Activated CD4-positive, alpha-beta T cell treated with anti-CD3 and anti-CD28 coated beads, Interleukin-2, amount 10 ng/mL, durations not matched to agents 24 days and 14 days (primary cell): ENCODE measurements at regions of chr5 and their contacts with region 1.

Region 1: DNA sequence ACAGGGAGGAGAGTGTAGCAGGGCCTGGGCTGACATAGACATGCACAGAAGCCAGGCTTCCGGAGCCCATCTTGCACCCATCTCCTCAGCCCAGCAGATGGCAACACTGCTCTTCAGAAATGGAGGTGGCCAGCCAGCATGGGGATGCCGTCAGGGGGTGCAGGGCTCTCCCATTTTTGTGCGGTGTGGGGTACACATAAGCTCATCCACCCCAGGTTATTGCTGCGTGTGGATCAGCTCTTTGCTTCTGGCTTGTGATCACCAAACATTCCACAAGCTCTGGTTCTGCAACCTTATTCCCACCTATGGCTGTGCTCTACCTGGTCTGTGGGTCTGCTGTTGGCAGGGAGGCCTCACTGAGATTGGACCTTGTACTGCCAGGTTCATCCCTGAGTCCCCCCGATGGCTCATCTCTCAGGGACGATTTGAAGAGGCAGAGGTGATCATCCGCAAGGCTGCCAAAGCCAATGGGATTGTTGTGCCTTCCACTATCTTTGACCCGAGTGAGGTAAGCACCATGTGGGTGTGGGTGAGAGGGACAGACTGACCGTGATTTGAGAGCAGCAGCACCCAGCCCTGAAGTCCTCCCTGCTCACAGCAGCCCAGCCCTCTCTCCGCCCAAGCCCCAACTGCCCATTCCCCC is 17.3 kb downstream of the SLC22A5 start:
- DNase-seq: peak; percentile 93
- H3K4me3 Mint-ChIP-seq: no peak overlapping the region
- H3K27ac Mint-ChIP-seq: no peak overlapping the region
- H3K4me1 Mint-ChIP-seq: peaks cover 51% of the 10 kb centered on the region
- H3K27me3 Mint-ChIP-seq: no peaks in the 10 kb centered on the region

Region 2: GRCh38 chr5:132094393-132095076 is 292.2 kb before region 1 on chr5:
- intact Hi-C with region 1: no loop called
- DNase-seq: no peak
- H3K4me3 Mint-ChIP-seq: no peak overlapping the region
- H3K27ac Mint-ChIP-seq: peak overlapping the region; percentile 75
- H3K4me1 Mint-ChIP-seq: peaks cover 54% of the 10 kb centered on the region
- H3K27me3 Mint-ChIP-seq: no peaks in the 10 kb centered on the region

Region 3: GRCh38 chr5:132238169-132238744 is 148.5 kb before region 1 on chr5:
- intact Hi-C with region 1: loop called (anchors 5 kb)
- DNase-seq: peak; percentile 93
- H3K4me3 Mint-ChIP-seq: no peak overlapping the region
- H3K27ac Mint-ChIP-seq: no peak overlapping the region
- H3K4me1 Mint-ChIP-seq: peaks cover 6% of the 10 kb centered on the region
- H3K27me3 Mint-ChIP-seq: peaks cover 7% of the 10 kb centered on the region

Region 4: DNA sequence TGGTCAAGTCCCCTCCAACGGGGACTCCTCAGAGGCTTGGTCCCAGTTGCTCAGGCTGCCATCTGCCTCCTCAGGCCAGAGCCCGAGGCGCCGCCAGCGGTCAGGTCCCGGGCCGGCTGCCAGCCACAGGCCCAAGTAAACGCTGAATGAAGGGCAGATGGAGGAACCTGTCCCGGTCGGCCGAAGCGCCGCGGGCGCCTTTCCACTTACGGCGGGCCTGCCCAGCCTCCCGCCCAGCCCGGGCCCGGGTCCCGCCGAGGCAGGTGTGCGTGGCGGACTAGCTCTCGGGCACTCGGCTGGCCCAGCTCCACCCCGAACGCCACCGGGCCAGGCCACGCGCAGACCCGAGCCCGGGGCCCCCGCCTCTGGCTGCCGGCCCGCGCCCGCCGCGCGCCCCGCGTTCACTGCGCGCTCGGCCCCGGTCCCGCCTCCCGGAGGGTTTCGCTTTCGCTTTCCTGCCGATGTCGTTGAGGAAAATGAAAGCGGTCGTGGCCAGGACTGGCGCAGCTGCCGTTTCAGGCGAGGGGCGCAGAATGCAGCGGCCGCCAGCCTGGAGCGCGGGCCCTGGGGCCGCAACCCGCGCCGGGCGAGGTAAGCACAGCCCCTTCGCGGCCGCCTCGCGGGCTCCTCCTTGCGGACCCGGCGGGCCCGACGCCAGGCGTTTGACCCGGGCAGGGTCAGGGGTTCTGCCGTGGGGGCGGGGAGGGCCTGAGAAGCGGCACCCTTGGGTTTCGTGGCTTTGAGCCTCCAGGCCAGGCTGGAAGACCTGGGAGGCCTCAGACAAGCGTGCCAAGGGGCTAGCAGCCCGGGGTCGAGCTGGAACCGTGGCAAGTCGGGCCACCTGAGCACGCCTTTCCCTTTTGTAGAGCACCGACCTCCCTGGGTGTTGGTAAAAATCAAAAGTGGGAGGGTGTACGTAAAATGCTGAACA is 24.0 kb after region 1 on chr5:
- intact Hi-C with region 1: loop called (anchors 1 kb)
- DNase-seq: peak; percentile 98
- H3K4me3 Mint-ChIP-seq: peak overlapping the region; percentile 100
- H3K27ac Mint-ChIP-seq: peak overlapping the region; percentile 99
- H3K4me1 Mint-ChIP-seq: peaks cover 48% of the 10 kb centered on the region
- H3K27me3 Mint-ChIP-seq: no peaks in the 10 kb centered on the region

Region 5: DNA sequence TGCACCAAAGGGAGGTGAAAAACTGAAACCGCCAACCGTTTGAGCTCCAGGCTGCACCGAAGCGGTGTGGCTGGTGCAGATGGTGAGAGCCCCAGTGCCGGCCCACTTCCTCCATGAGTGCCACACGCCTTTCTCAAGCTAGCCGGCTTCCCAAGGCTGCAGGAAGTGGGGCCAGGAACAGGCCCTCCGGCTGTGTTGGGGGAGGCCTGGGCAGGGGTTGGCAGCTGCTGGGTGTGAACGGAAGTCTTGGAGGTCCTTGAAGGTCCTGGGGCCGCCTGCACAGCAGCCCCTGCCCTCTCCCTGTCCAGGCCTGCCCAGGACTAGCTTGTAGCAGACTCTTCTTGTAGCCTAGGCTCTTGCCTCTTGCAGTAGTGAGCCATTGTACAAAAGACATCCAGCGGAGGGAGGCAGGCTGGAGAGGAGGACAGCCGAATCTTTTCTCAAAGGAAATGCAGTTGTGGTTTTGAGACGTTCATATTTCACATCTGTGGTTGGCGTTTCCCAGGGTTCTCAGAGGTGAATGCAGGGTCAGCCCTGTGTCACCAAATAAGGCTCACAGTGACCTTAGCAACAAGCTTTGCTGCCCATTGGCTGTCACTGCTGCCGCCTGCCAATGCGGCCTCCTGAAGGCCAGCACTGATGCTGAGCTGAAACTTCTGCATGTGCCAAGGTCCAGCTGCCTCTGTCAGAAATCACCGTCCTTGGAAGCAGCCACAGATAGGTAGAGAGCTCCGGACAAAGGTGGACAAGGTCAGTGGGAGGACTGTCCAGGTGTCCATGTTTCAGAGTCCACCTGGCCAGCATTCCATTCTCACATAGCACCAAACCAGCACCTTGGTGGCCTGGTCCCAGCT is 79.9 kb after region 1 on chr5:
- intact Hi-C with region 1: no loop called
- DNase-seq: peak; percentile 93
- H3K4me3 Mint-ChIP-seq: peak overlapping the region; percentile 64
- H3K27ac Mint-ChIP-seq: peak overlapping the region; percentile 80
- H3K4me1 Mint-ChIP-seq: peaks cover 81% of the 10 kb centered on the region
- H3K27me3 Mint-ChIP-seq: no peaks in the 10 kb centered on the region

Region 6: GRCh38 chr5:132500931-132501630 is 114.3 kb after region 1 on chr5:
- intact Hi-C with region 1: loop called (anchors 1 kb)
- DNase-seq: peak; percentile 92
- H3K4me3 Mint-ChIP-seq: no peak overlapping the region
- H3K27ac Mint-ChIP-seq: peak overlapping the region; percentile 65
- H3K4me1 Mint-ChIP-seq: peaks cover 43% of the 10 kb centered on the region
- H3K27me3 Mint-ChIP-seq: peaks cover 2% of the 10 kb centered on the region

Region 7: DNA sequence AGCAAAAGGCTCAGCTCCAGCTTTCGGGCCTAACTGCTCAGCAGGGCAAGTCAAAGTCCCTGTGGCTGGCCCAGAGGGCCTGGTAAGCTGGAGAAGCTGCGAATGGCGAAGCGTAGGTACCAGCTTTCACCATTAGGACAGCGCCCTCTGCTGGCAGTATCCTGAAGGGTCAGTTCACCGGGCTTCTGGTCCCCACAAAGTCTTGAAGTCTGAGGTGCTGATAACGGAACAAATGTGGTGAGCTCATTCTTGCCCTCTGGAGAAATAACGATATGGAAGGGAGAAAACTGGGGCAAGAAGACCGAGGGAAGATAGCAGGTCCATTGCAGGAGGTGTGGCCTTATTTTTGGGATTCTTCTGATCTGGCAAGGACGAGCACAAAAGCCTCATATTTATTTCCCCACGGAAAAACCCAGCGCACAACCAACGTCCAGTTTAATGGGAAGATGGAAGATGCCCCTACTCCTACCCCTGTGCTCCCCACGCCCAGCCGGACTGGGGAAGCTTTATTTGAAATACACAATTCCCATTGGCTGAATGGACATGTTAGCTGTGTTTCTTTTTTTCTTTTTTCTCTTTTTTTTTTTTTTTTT is 433.5 kb after region 1 on chr5:
- intact Hi-C with region 1: loop called (anchors 1 kb)
- DNase-seq: peak; percentile 97
- H3K4me3 Mint-ChIP-seq: peak overlapping the region; percentile 37
- H3K27ac Mint-ChIP-seq: no peak overlapping the region
- H3K4me1 Mint-ChIP-seq: peaks cover 15% of the 10 kb centered on the region
- H3K27me3 Mint-ChIP-seq: peaks cover 39% of the 10 kb centered on the region

Region 8: GRCh38 chr5:132883261-132883834 is 496.6 kb after region 1 on chr5:
- intact Hi-C with region 1: loop called (anchors 1 kb)
- DNase-seq: peak; percentile 75
- H3K4me3 Mint-ChIP-seq: no peak overlapping the region
- H3K27ac Mint-ChIP-seq: no peak overlapping the region
- H3K4me1 Mint-ChIP-seq: peaks cover 8% of the 10 kb centered on the region
- H3K27me3 Mint-ChIP-seq: no peaks in the 10 kb centered on the region

Region 9: DNA sequence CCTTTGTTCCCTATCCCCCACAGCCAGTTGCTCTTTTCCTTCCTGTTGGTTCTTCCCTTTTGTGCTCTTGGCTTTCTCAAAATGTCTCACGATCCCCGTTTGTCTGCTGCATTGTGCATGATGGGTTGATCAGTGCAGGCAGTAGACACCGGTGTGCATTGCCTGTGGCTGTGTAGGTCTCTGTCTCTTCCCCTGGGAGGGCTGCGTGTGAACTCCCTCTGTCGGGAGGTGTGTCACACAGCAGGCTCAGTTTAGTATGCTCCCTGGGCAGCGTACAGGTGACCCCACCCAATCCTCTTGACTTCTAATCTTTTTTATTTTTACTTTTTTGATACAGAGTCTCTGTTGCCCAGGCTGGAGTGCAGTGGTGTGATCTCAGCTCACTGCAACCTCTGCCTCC is 960.3 kb after region 1 on chr5:
- intact Hi-C with region 1: no loop called
- DNase-seq: no peak
- H3K4me3 Mint-ChIP-seq: no peak overlapping the region
- H3K27ac Mint-ChIP-seq: no peak overlapping the region
- H3K4me1 Mint-ChIP-seq: no peaks in the 10 kb centered on the region
- H3K27me3 Mint-ChIP-seq: peaks cover 29% of the 10 kb centered on the region